Breast epithelium (tissue), 4 donors: ENCODE measurements at regions of chr2 and their contacts with region 1.

Region 1: GRCh38 chr2:186806591-186806990 is 42.4 kb downstream of the ZSWIM2 start:
- DNase-seq: no peak
- H3K4me3 ChIP-seq: no peak overlapping the region
- H3K27ac ChIP-seq: no peak overlapping the region
- H3K4me1 ChIP-seq: no peaks in the 10 kb centered on the region
- H3K27me3 ChIP-seq: no peaks in the 10 kb centered on the region
- CTCF ChIP-seq: no peak
- POLR2A ChIP-seq: no peak

Region 2: GRCh38 chr2:186349508-186349907 is 457.1 kb before region 1 on chr2:
- intact Hi-C with region 1: loop called (anchors 5 kb)
- DNase-seq: no peak
- H3K4me3 ChIP-seq: no peak overlapping the region
- H3K27ac ChIP-seq: no peak overlapping the region
- H3K4me1 ChIP-seq: no peaks in the 10 kb centered on the region
- H3K27me3 ChIP-seq: no peaks in the 10 kb centered on the region
- CTCF ChIP-seq: no peak
- POLR2A ChIP-seq: no peak

Region 3: DNA sequence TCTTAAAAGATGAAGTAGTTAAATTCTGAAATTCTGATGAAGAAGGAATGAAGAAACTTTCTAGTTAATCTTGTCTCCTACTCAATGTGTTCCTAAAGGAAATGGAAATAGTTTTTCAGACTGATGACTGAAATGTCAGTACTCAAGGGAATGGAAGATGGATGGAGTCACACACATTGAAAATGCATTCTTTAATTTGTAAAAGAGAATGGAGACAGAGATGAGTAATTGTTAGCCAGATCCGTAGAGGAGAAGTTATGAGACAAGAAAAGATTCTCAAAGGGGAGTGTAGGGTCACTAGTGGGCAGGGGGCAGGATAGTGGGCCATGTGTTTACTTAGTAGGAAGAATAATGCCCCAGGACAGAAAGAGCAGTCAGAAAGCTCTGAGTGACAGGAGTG is 29.0 kb after region 1 on chr2:
- intact Hi-C with region 1: no loop called
- DNase-seq: no peak
- H3K4me3 ChIP-seq: no peak overlapping the region
- H3K27ac ChIP-seq: no peak overlapping the region
- H3K4me1 ChIP-seq: no peaks in the 10 kb centered on the region
- H3K27me3 ChIP-seq: no peaks in the 10 kb centered on the region
- CTCF ChIP-seq: no peak
- POLR2A ChIP-seq: no peak